Prostate gland (tissue), 2 donors: ENCODE measurements at regions of chr4 and their contacts with region 1.

Region 1: DNA sequence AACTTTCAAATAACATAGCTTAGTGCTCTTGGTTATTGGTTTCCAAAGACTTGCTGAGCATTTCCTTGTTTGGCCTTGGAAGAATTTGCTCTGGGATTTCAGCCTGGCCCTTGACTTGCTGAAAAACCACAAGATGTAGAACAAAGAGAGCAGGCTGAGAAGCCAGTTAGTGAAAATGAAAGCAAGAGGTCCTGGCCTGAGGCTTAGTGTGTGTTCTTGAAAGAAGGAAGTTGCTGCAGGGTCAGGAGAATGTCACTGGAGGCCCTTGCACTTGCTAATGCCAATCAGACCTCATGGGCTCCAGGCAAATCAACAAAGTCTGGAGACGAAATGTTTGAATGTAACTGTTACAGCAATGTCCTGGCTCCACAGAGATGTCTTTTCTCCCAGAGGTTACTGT is 79.4 kb downstream of the SYNPO2 start:
- DNase-seq: peak; percentile 52
- H3K4me3 ChIP-seq: no peak overlapping the region
- H3K27ac ChIP-seq: peak overlapping the region; percentile 66 to 72
- H3K4me1 ChIP-seq: no peaks in the 10 kb centered on the region
- H3K27me3 ChIP-seq: no peaks in the 10 kb centered on the region
- CTCF ChIP-seq: no peak
- POLR2A ChIP-seq: no peak

Region 2: DNA sequence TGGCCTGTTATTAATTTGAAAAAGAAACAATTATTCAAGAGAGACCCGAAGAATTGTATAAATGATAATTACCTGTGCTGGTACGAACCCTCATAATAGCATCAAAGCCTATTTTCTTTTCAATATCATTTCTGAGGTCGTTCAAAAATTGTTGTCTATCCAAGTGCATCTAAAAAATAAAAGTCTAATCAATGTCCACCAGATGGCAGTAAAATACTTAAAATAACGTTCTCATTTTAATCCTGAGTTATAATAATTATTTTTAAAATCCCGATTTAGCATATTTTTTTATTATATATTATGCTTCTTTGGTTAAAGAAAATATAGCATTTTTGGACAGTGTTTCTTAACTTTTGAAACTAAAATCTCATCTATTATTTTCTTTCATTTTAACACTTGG is 227.1 kb before region 1 on chr4:
- intact Hi-C with region 1: loop called (anchors 2 kb)
- DNase-seq: no peak
- H3K4me3 ChIP-seq: no peak overlapping the region
- H3K27ac ChIP-seq: no peak overlapping the region
- H3K4me1 ChIP-seq: peaks cover 3% of the 10 kb centered on the region
- H3K27me3 ChIP-seq: no peaks in the 10 kb centered on the region
- CTCF ChIP-seq: peak in 3 of 4 experiments; percentile 54 to 66 (median 58)
- POLR2A ChIP-seq: no peak

Region 3: DNA sequence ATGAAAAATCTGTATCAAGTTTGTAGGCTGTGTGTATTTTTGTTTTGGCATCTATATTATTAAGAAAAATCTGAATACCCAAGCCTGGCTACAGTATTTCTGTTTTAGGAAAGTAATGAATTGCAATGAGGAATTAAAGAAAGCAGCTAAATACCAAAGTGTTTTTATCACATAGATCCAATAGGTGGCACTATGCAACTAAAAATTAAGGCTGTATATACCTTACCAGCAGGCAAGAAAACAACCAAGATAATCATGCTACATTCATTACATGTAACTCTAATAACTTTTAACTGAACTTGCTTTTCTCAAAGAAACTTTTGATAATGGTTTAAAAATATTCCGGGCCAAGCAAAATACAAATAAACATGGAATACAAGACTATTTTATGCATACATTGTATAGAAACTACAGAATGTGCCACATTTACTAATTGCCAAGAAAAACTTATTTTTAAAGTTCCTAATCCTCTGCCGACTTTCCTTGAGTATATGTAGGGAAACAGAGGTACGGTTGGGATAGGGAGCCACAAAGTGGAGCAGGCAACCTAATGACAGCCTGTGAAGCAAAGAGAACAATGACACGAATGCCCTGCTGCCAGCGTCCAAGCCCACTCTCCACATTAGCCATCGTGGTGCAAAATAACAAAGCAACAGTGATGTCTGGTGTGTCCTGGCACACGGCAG is 195.8 kb before region 1 on chr4:
- intact Hi-C with region 1: loop called (anchors 5 kb)
- DNase-seq: no peak
- H3K4me3 ChIP-seq: no peak overlapping the region
- H3K27ac ChIP-seq: peak overlapping the region; percentile 59 to 67
- H3K4me1 ChIP-seq: no peaks in the 10 kb centered on the region
- H3K27me3 ChIP-seq: no peaks in the 10 kb centered on the region
- CTCF ChIP-seq: peak; percentile 17 to 78 (median 62)
- POLR2A ChIP-seq: no peak

Region 4: GRCh38 chr4:118835571-118836300 is 132.3 kb before region 1 on chr4 and contains the start of gene SEC24D:
- intact Hi-C with region 1: loop called (anchors 5 kb)
- DNase-seq: peak; percentile 80
- H3K4me3 ChIP-seq: peak within 1 kb of the TSS; percentile 99
- H3K27ac ChIP-seq: peak within 1 kb of the TSS; percentile 96
- H3K4me1 ChIP-seq: no peaks in the 10 kb centered on the region
- H3K27me3 ChIP-seq: no peaks in the 10 kb centered on the region
- CTCF ChIP-seq: peak in 2 of 4 experiments; percentile 23
- POLR2A ChIP-seq: peak; percentile 89
- total RNA-seq, gene SEC24D: 31.5 to 34.9 TPM

Region 5: DNA sequence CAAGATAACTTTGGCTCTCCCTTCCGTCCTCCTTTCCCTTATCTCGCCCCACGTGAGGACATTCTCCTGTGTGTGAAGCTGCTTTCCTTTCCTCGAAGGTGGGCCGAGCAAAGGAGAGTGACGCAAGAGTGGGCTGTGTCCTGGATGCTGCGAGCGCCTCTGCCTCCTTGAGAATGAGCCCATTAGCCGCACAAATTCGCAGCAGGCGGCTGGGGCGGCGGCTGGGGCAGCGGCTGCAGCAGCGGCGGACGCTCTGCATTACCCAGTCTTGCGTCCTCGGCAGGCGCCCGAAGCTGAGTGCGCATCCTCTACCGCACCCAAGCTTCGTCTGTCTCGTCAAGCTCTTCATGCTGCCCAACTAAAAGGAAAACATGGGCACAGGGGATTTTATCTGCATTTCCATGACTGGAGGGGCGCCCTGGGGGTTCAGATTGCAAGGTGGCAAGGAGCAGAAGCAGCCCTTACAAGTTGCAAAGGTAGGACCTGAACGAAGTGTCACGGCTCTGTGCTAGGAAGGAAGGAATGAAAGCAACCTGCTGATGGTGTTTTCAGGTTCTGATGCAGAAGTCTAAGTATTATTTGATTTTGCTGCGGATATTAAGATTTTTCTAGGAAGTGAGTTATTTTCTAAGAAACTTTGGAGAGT is 79.2 kb before region 1 on chr4 and contains the start of gene SYNPO2:
- intact Hi-C with region 1: loop called (anchors 2 kb)
- DNase-seq: peak; percentile 79
- H3K4me3 ChIP-seq: peak within 1 kb of the TSS; percentile 26 to 37
- H3K27ac ChIP-seq: peak within 1 kb of the TSS; percentile 41 to 78
- H3K4me1 ChIP-seq: no peaks in the 10 kb centered on the region
- H3K27me3 ChIP-seq: no peaks in the 10 kb centered on the region
- CTCF ChIP-seq: peak in 1 of 4 experiments; percentile 1
- POLR2A ChIP-seq: peak; percentile 76
- total RNA-seq, gene SYNPO2: 131 to 181 TPM

Region 6: DNA sequence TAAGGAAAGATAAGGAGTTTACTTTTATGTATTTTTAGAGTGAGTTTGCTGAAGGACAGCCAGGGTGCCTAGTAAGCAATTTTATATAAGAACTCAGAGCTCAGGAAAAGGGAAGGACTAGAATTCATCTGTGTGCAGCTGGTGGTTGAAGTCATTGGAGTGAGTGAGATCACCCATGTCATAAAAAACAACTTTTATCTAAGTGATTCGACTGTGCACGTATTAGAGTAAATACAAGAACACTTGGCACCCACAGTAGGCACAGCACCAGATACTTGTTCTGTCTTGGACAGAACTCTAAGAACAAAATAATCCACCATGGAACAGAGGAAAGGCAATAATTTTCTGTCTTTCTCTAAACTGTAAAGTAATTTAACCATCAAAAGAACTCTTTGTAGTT is 47.8 kb before region 1 on chr4:
- intact Hi-C with region 1: loop called (anchors 5 kb)
- DNase-seq: no peak
- H3K4me3 ChIP-seq: no peak overlapping the region
- H3K27ac ChIP-seq: peak overlapping the region; percentile 6 to 9
- H3K4me1 ChIP-seq: no peaks in the 10 kb centered on the region
- H3K27me3 ChIP-seq: no peaks in the 10 kb centered on the region
- CTCF ChIP-seq: no peak
- POLR2A ChIP-seq: no peak

Region 7: DNA sequence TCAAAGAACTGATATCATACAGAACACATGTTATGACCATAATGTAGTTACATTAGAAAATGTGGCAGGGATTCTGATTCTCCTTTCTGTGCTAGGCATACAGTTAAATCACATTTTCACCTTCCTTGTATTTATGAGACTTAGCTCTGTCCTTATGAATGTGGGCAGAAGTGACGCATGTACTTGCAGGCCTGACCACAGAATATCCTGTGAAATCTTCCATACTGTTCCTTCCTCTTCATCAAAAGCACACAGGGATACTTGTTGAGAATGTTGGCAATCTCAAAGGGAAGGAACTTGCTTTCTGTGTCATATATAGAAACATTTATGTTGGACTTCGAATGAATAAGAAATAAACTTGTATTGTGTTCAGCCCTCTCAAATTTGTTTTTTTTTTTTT is 150.4 kb after region 1 on chr4:
- intact Hi-C with region 1: no loop called
- DNase-seq: no peak
- H3K4me3 ChIP-seq: no peak overlapping the region
- H3K27ac ChIP-seq: no peak overlapping the region
- H3K4me1 ChIP-seq: no peaks in the 10 kb centered on the region
- H3K27me3 ChIP-seq: no peaks in the 10 kb centered on the region
- CTCF ChIP-seq: no peak
- POLR2A ChIP-seq: no peak